HEK293 (cell line): ENCODE measurements at regions of chr1 and their contacts with region 1.

Region 1: GRCh38 chr1:101843160-101843559 is 153.6 kb downstream of the OLFM3 start:
- H3K4me3 ChIP-seq: no peak overlapping the region
- H3K27ac ChIP-seq: no peak overlapping the region
- H3K4me1 ChIP-seq: no peaks in the 10 kb centered on the region
- CTCF ChIP-seq: no peak

Region 2: GRCh38 chr1:101587741-101588140 is 255.4 kb before region 1 on chr1:
- CTCF ChIA-PET with region 1: no interaction called
- POLR2A ChIA-PET with region 1: no interaction called
- H3K4me3 ChIP-seq: no peak overlapping the region
- H3K27ac ChIP-seq: no peak overlapping the region
- H3K4me1 ChIP-seq: no peaks in the 10 kb centered on the region
- CTCF ChIP-seq: no peak

Region 3: GRCh38 chr1:101854271-101854670 is 11.1 kb after region 1 on chr1:
- CTCF ChIA-PET with region 1: interaction called, 10 read pairs
- POLR2A ChIA-PET with region 1: no interaction called
- H3K4me3 ChIP-seq: no peak overlapping the region
- H3K27ac ChIP-seq: no peak overlapping the region
- H3K4me1 ChIP-seq: no peaks in the 10 kb centered on the region
- CTCF ChIP-seq: no peak

Region 4: GRCh38 chr1:102201591-102201990 is 358.4 kb after region 1 on chr1:
- CTCF ChIA-PET with region 1: no interaction called
- POLR2A ChIA-PET with region 1: no interaction called
- H3K4me3 ChIP-seq: no peak overlapping the region
- H3K27ac ChIP-seq: no peak overlapping the region
- H3K4me1 ChIP-seq: no peaks in the 10 kb centered on the region
- CTCF ChIP-seq: no peak